GM12878 (cell line): ENCODE measurements at regions of chr6 and their contacts with region 1.

Region 1: DNA sequence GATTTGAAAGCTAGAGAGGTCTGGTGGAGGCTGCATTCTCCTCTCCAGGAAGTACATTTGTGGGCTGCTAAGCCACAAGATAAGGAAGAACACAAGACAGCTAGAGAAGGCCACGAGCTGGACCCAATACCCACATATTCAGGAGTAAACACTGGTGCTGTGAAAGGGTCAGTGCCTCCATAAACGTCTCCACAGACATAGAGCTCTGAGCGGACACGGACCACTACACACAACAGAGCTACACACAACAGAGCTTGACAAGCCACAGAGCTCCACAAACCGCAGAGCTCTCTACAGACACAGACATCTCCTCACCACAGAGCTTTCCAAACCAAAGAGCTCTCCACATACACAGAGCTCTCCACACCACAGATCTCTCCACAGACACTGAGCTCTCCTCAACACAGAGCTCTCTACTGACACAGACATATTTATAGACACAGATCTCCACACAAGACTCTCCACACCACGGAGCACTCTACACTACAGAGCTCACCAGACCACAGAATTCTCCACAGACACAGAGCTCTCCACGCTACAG is 51.9 kb downstream of the ERMARD start:
- DNase-seq: peak; percentile 9
- ATAC-seq: peak; percentile 53
- H3K4me3 ChIP-seq: no peak overlapping the region
- H3K27ac ChIP-seq: no peak overlapping the region
- H3K4me1 ChIP-seq: peaks cover 5% of the 10 kb centered on the region; the same call in 1 of the 2 replicates
- H3K27me3 ChIP-seq: peaks cover 0 to 3% of the 10 kb centered on the region in 2 experiments; a peak in 2 of 4 replicates
- CTCF ChIP-seq: no peak
- EP300 ChIP-seq: no peak
- POLR2A ChIP-seq: no peak
- RAD21 ChIP-seq: no peak

Region 2: GRCh38 chr6:169789982-169790927 is 13.1 kb before region 1 on chr6:
- CTCF ChIA-PET with region 1: interaction called, 35 read pairs
- POLR2A ChIA-PET with region 1: no interaction called
- RAD21 ChIA-PET with region 1: interaction called, 6 read pairs
- SMC1A ChIA-PET with region 1: interaction called, 5 read pairs
- in situ Hi-C with region 1: no loop called
- intact Hi-C with region 1: no loop called
- DNase-seq: no peak
- ATAC-seq: peak; percentile 98
- H3K4me3 ChIP-seq: peak overlapping the region; percentile 45; the same call in 1 of the 2 replicates
- H3K27ac ChIP-seq: no peak overlapping the region
- H3K4me1 ChIP-seq: peaks cover 4% of the 10 kb centered on the region; the same call in 1 of the 2 replicates
- H3K27me3 ChIP-seq: peaks cover 3 to 4% of the 10 kb centered on the region in 2 experiments
- CTCF ChIP-seq: peak; percentile 89 to 96 (median 93)
- EP300 ChIP-seq: no peak
- POLR2A ChIP-seq: no peak
- RAD21 ChIP-seq: peak; percentile 87